ENCODE measurements at regions of chr2 and their contacts with region 1.

Region 1: DNA sequence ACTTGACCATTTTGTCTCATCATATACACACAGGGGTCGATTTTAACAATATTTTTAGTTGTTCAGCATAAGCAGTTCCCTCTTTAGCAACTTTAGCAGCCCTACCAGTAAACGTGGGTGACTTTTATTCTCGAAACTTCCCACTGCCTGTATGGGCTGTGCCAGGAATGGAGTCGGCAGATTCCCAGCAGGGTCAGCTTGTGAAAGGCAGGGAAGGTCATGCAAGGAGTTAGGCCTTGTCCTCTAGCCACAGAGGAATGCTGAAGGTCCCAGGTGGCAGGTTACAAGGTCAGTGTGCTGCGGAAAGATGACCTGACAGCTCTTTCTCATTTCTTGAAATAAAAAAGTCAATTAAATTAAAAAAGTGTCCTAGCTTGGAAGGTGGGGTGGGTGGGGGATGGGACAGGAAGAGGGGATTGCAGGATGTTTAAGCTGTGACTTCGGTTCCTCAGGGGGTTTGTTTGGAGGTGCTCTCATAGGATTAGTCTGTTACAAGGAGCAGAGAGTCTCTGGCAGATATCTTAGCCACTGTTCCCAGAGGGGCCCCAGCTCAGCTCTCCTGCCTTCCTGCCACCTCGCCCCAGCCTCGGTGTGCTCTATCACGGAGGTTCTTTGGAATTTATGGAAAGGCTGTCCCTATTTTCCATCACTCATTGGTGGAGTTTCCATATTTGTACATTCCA is 21.4 kb downstream of the DRC1 start:
- DNase-seq: no peak
- H3K4me3 ChIP-seq: no peak overlapping the region
- H3K27ac ChIP-seq: no peak overlapping the region
- H3K4me1 ChIP-seq: no peaks in the 10 kb centered on the region
- H3K27me3 ChIP-seq: peaks cover 2 to 3% of the 10 kb centered on the region in 2 experiments
- CTCF ChIP-seq: no peak
- POLR2A ChIP-seq: no peak

Region 2: DNA sequence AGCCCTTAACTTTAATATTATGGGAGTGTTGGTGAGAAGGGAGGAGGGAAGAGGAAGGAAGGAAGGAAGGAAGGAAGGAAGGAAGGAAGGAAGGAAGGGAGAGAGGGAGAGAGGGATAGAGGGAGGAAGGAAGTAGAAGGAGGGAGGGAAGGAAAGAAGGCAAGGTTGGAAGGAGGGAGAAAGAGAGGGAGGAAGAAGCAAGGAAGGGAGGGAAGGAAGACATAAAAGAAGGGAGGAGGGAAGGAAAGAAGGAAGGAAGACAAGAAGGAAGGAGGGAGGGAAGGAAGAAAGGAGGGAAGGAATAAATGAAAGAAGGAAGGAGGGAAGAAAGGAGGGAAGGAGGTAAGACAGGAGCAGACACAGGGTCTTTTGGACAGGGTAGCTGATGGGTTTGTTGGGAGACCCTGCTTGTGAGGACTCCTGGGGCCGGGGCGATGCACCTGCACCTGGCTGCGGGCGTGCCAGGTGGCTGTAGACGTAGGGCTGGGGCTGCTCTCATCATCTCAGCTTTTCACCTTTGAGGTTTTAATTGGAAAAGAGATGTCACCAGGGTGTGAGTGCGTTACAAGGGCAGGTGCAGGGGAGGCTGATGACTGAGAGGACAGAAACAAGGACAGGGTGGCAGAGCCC is 1248.7 kb before region 1 on chr2:
- CTCF ChIA-PET with region 1: no interaction called
- POLR2A ChIA-PET with region 1: interaction called, 10 read pairs
- dilution Hi-C with region 1: no loop called
- intact Hi-C with region 1: no loop called
- DNase-seq: no peak
- H3K4me3 ChIP-seq: no peak overlapping the region
- H3K27ac ChIP-seq: no peak overlapping the region
- H3K4me1 ChIP-seq: no peaks in the 10 kb centered on the region
- H3K27me3 ChIP-seq: peaks cover 19 to 28% of the 10 kb centered on the region in 2 experiments
- CTCF ChIP-seq: no peak
- POLR2A ChIP-seq: no peak